ENCODE measurements at regions of chr4 and their contacts with region 1.

Region 1: DNA sequence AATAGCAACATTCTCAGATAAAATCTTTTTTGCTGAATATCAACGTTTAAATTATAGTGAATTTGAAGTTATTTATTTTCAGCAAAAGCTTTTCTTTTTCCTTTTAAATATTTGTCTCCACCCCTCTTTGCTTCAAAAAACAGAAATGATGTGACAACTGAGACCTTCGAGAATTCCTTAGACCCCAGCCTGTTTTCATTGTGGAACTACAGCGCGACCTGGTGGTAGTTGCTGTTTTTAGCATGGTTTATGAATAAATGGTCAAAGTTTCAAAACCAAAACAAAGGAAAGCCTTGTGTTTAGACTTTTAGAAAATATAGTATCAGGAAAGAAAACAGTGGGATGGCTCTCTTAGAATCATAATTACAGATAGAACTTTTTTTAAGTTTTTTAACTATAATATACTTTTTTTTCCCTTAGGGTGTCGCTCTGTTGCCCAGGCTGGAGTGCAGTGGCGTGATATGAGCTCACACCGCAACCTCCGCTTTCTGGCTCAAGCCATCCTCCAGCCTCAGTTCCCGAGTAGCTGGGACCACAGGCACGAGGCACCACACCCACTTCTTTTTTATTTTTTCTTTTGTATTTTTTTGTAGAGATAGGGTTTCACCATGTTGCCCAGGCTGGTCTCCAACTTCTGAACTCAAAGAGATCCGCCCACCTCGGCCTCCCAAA is 26.8 kb upstream of the TMEM184C start:
- DNase-seq: no peak
- ATAC-seq: peak; percentile 80
- H3K4me3 ChIP-seq: no peak overlapping the region
- H3K27ac ChIP-seq: no peak overlapping the region
- H3K4me1 ChIP-seq: peaks cover 7% of the 10 kb centered on the region; the same call in 1 of the 2 replicates
- H3K27me3 ChIP-seq: no peaks in the 10 kb centered on the region
- CTCF ChIP-seq: peak; percentile 68 to 78 (median 77)
- EP300 ChIP-seq: no peak
- POLR2A ChIP-seq: no peak
- RAD21 ChIP-seq: peak; percentile 100

Region 2: GRCh38 chr4:147019061-147019460 is 571.3 kb before region 1 on chr4:
- CTCF ChIA-PET with region 1: interaction called, 17 read pairs
- POLR2A ChIA-PET with region 1: no interaction called
- RAD21 ChIA-PET with region 1: interaction called, 9 read pairs
- SMC1A ChIA-PET with region 1: interaction called, 7 read pairs
- in situ Hi-C with region 1: no loop called
- intact Hi-C with region 1: loop called (anchors 1 kb)
- DNase-seq: no peak
- ATAC-seq: peak; percentile 97
- H3K4me3 ChIP-seq: no peak overlapping the region
- H3K27ac ChIP-seq: no peak overlapping the region
- H3K4me1 ChIP-seq: no peaks in the 10 kb centered on the region
- H3K27me3 ChIP-seq: no peaks in the 10 kb centered on the region; a peak in 1 of 4 replicates
- CTCF ChIP-seq: peak; percentile 64 to 78 (median 71)
- EP300 ChIP-seq: no peak
- POLR2A ChIP-seq: no peak
- RAD21 ChIP-seq: peak; percentile 90

Region 3: GRCh38 chr4:147096667-147097604 is 493.4 kb before region 1 on chr4:
- CTCF ChIA-PET with region 1: interaction called, 10 read pairs
- POLR2A ChIA-PET with region 1: no interaction called
- RAD21 ChIA-PET with region 1: no interaction called
- SMC1A ChIA-PET with region 1: interaction called, 9 read pairs
- in situ Hi-C with region 1: no loop called
- intact Hi-C with region 1: no loop called
- DNase-seq: no peak
- ATAC-seq: peak; percentile 64
- H3K4me3 ChIP-seq: no peak overlapping the region
- H3K27ac ChIP-seq: no peak overlapping the region
- H3K4me1 ChIP-seq: no peaks in the 10 kb centered on the region
- H3K27me3 ChIP-seq: peaks cover 0 to 1% of the 10 kb centered on the region in 2 experiments; a peak in 2 of 4 replicates
- CTCF ChIP-seq: peak; percentile 32 to 66 (median 43); a peak in 5 of 6 replicates
- EP300 ChIP-seq: no peak
- POLR2A ChIP-seq: no peak
- RAD21 ChIP-seq: peak; percentile 86

Region 4: DNA sequence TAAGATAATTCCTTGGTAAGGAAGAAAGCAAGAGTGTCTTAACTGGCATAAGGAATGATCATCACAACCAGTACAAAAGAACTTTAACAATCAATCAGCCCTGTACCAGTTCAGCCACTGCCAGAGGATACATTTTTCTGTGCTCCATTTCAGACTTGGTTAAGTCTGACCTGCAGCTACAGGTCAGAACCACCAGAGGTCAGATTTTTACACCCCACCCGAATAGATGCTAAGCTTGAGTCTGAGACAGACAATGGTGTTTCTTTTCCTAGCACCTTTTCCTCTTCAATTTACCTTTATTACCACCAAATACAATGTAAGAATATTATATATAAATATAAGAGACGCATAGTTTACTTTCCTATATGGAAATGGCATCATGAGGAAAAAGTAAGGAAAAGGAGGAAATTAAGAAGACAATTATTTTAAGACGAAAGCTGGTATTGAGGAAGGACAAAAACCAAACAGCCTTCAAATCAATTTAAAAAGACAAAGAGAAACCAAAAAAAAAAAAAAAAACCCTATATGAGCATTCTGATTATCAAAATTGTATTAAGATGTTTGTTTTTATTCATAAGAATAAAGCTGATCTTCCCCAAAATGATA is 429.4 kb before region 1 on chr4:
- CTCF ChIA-PET with region 1: interaction called, 61 read pairs
- POLR2A ChIA-PET with region 1: no interaction called
- RAD21 ChIA-PET with region 1: interaction called, 28 read pairs
- SMC1A ChIA-PET with region 1: interaction called, 28 read pairs
- in situ Hi-C with region 1: no loop called
- intact Hi-C with region 1: loop called (anchors 1 kb)
- DNase-seq: no peak
- ATAC-seq: peak; percentile 89
- H3K4me3 ChIP-seq: no peak overlapping the region
- H3K27ac ChIP-seq: no peak overlapping the region
- H3K4me1 ChIP-seq: no peaks in the 10 kb centered on the region
- H3K27me3 ChIP-seq: peaks cover 0 to 7% of the 10 kb centered on the region in 2 experiments; a peak in 2 of 4 replicates
- CTCF ChIP-seq: peak; percentile 68 to 79 (median 71)
- EP300 ChIP-seq: no peak
- POLR2A ChIP-seq: no peak
- RAD21 ChIP-seq: peak; percentile 79

Region 5: GRCh38 chr4:147492761-147493160 is 97.6 kb before region 1 on chr4:
- CTCF ChIA-PET with region 1: no interaction called
- POLR2A ChIA-PET with region 1: no interaction called
- RAD21 ChIA-PET with region 1: no interaction called
- SMC1A ChIA-PET with region 1: no interaction called
- in situ Hi-C with region 1: no loop called
- intact Hi-C with region 1: no loop called
- DNase-seq: peak; percentile 27
- ATAC-seq: no peak
- H3K4me3 ChIP-seq: no peak overlapping the region
- H3K27ac ChIP-seq: no peak overlapping the region
- H3K4me1 ChIP-seq: no peaks in the 10 kb centered on the region
- H3K27me3 ChIP-seq: no peaks in the 10 kb centered on the region; a peak in 1 of 4 replicates
- CTCF ChIP-seq: no peak
- EP300 ChIP-seq: no peak
- POLR2A ChIP-seq: no peak
- RAD21 ChIP-seq: no peak

Region 6: DNA sequence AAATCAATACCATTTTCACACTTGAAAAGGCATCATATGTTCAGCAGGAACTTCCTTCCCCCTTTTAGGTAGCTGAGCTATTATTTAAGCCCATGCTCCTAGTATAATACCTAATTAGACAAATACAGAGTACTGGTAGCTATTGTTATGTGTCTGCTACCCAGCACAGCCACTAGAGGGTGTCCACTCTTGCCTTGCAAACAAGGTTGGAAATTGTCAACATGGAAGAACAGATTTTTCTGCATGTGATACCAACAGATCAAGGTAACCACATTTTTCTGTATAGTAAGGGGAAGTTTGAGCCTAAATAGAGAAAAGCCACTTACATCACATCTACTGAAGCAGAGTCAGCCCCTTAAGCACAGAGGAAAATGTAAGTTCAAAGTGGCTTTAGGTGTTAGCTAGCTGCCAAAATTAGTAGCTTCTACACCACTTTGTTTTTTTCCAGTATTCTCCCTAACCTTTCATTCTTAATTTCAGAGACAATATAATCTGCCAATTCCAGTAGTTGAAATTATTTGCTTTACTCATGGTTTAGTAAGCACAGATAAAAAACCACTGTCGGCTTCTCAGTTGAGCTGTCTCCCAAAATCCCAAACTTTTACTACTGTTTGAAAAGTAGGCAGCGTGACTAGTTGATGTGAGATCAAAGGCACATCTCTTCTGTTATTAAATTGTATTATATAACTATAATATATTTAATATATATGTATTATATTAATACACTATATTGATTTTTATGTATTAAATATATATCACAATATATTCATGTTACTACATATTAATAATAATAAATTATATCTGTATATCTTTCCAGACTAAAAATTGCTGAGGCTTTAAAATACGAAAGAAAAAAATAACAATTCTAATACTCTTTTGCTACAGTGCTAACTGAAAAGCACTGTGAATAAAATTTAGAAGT is 71.3 kb before region 1 on chr4:
- CTCF ChIA-PET with region 1: interaction called, 93 read pairs
- POLR2A ChIA-PET with region 1: no interaction called
- RAD21 ChIA-PET with region 1: interaction called, 49 read pairs
- SMC1A ChIA-PET with region 1: interaction called, 47 read pairs
- in situ Hi-C with region 1: loop called (anchors 5 kb)
- intact Hi-C with region 1: loop called (anchors 1 kb)
- DNase-seq: peak; percentile 28
- ATAC-seq: peak; percentile 97
- H3K4me3 ChIP-seq: no peak overlapping the region
- H3K27ac ChIP-seq: no peak overlapping the region
- H3K4me1 ChIP-seq: no peaks in the 10 kb centered on the region
- H3K27me3 ChIP-seq: no peaks in the 10 kb centered on the region; a peak in 1 of 4 replicates
- CTCF ChIP-seq: peak; percentile 93 to 96 (median 93)
- EP300 ChIP-seq: no peak
- POLR2A ChIP-seq: no peak
- RAD21 ChIP-seq: peak; percentile 94

Region 7: DNA sequence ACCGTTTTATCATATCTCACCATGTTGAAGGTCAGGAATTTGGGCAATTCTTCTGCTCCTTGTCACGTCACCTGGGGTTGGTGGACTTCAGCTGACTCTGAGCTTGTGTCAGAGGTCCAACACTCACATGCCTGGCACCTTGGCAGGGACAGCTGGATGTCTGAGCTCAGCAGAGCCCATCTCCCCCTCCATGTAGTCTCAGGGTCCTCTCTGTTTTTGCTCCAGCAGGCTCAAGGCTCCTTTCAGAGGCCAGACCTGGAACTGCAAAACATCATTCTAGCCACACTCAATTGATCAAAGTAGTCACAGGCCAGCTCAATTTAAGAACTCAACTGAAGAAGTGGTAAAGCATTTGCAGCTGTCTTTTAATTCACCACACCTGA is 64.1 kb before region 1 on chr4:
- CTCF ChIA-PET with region 1: interaction called, 16 read pairs
- POLR2A ChIA-PET with region 1: no interaction called
- RAD21 ChIA-PET with region 1: interaction called, 4 read pairs
- SMC1A ChIA-PET with region 1: interaction called, 8 read pairs
- in situ Hi-C with region 1: no loop called
- intact Hi-C with region 1: no loop called
- DNase-seq: no peak
- ATAC-seq: peak; percentile 71
- H3K4me3 ChIP-seq: no peak overlapping the region
- H3K27ac ChIP-seq: no peak overlapping the region
- H3K4me1 ChIP-seq: no peaks in the 10 kb centered on the region
- H3K27me3 ChIP-seq: no peaks in the 10 kb centered on the region; a peak in 1 of 4 replicates
- CTCF ChIP-seq: peak in 2 of 3 experiments; percentile 24 to 27; a peak in 2 of 6 replicates
- EP300 ChIP-seq: no peak
- POLR2A ChIP-seq: no peak
- RAD21 ChIP-seq: peak; percentile 46

Region 8: DNA sequence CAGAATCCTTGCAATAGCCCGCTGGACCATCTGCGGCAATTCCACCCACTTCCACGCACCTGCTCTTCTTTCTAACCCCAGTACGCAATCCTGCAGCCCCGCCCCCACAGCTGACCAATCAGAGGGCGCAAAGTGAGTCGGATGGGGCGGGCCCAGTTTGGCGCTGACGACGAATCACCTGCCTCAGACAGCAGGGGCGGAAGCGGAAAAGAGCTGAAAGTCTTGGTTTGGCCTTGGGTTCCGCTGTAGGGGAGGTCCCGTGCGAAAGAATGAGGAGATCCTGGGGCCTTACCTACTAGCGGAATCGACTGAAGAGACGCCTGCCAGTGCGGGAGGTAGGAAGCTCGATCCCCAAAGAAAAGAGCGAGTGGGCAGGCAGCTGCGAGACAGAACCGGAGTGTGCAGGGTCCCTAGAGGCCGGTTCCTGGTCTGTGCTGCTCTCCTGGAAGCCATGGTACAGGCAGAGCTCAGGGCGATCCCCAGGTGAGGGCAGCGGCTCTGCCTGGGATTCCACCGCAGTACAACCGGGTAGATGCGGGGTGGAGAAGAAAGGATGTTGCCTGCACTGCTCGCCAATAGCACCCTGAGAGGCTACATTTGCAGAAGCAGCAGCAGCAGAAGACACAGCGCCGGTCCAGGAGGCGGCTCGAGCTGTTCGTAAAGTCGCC is 26.9 kb after region 1 on chr4 and contains the start of gene TMEM184C:
- CTCF ChIA-PET with region 1: interaction called, 17 read pairs
- POLR2A ChIA-PET with region 1: no interaction called
- RAD21 ChIA-PET with region 1: interaction called, 3 read pairs
- SMC1A ChIA-PET with region 1: interaction called, 6 read pairs
- in situ Hi-C with region 1: no loop called
- intact Hi-C with region 1: no loop called
- DNase-seq: peak; percentile 89
- ATAC-seq: peak; percentile 98
- H3K4me3 ChIP-seq: peak within 1 kb of the TSS; percentile 76
- H3K27ac ChIP-seq: peak within 1 kb of the TSS; percentile 90
- H3K4me1 ChIP-seq: no peaks in the 10 kb centered on the region
- H3K27me3 ChIP-seq: no peaks in the 10 kb centered on the region
- CTCF ChIP-seq: no peak
- EP300 ChIP-seq: peak in 1 of 2 experiments; percentile 14; a peak in 1 of 4 replicates
- POLR2A ChIP-seq: peak; percentile 93
- RAD21 ChIP-seq: no peak
- polyA plus RNA-seq, gene TMEM184C: 3.4 to 4.1 TPM

Region 9: GRCh38 chr4:147768113-147768512 is 177.7 kb after region 1 on chr4:
- CTCF ChIA-PET with region 1: no interaction called
- POLR2A ChIA-PET with region 1: no interaction called
- RAD21 ChIA-PET with region 1: no interaction called
- SMC1A ChIA-PET with region 1: no interaction called
- in situ Hi-C with region 1: no loop called
- intact Hi-C with region 1: no loop called
- DNase-seq: no peak
- ATAC-seq: peak; percentile 48; the same call in 2 of the 3 replicates
- H3K4me3 ChIP-seq: no peak overlapping the region
- H3K27ac ChIP-seq: no peak overlapping the region
- H3K4me1 ChIP-seq: peaks cover 11% of the 10 kb centered on the region
- H3K27me3 ChIP-seq: no peaks in the 10 kb centered on the region
- CTCF ChIP-seq: no peak
- EP300 ChIP-seq: no peak
- POLR2A ChIP-seq: no peak
- RAD21 ChIP-seq: no peak